Tibial artery (tissue), 4 donors: ENCODE measurements at regions of chr11 and their contacts with region 1.

Region 1: DNA sequence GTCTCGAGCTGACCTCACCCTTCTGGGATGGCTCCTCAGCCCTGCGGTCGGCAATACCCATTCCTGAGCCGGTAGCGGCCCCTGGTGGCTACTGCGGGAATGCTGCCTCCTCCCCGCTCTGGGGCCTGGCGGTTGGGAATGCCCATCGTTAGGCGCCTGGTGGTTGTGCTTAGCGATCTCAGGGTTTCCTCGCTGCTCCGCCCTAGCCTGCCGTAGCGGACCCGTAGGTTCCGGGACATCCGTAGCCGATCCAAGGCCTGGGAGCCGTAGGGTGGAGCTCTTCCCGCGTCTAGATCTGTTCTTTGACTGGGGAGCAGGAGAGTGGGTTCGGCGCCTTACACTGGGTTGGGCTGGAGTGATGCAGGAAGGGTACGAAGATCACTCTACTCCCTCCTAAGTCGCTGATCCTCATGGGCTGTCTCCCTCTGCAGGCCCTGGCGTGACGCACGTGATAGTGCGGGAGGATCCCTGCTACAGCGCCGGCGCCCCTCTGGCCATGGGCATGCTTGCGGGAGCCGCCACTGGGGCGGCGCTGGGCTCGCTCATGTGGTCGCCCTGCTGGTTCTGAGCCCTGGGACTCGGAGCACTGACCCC is 14.8 kb downstream of the PLEKHB1 start:
- DNase-seq: peak; percentile 90 to 92
- H3K4me3 ChIP-seq: peak overlapping the region; percentile 26 to 46
- H3K27ac ChIP-seq: peak overlapping the region in 1 of 2 donors; percentile 6
- H3K4me1 ChIP-seq: peaks cover 0 to 20% (median 14%) of the 10 kb centered on the region in 4 donors
- H3K27me3 ChIP-seq: no peaks in the 10 kb centered on the region
- CTCF ChIP-seq: peak; percentile 91 to 99

Region 2: GRCh38 chr11:73295231-73295995 is 365.7 kb before region 1 on chr11:
- intact Hi-C with region 1: loop called (anchors 10 kb)
- DNase-seq: peak; percentile 61 to 84
- H3K4me3 ChIP-seq: no peak overlapping the region
- H3K27ac ChIP-seq: peak overlapping the region in 1 of 2 donors; percentile 10
- H3K4me1 ChIP-seq: peaks cover 0 to 11% (median 7%) of the 10 kb centered on the region in 4 donors
- H3K27me3 ChIP-seq: no peaks in the 10 kb centered on the region
- CTCF ChIP-seq: peak; percentile 83 to 88

Region 3: GRCh38 chr11:73402834-73403185 is 258.3 kb before region 1 on chr11:
- intact Hi-C with region 1: loop called (anchors 2 kb)
- DNase-seq: no peak
- H3K4me3 ChIP-seq: no peak overlapping the region
- H3K27ac ChIP-seq: no peak overlapping the region
- H3K4me1 ChIP-seq: peaks cover 0 to 5% (median 2%) of the 10 kb centered on the region in 4 donors
- H3K27me3 ChIP-seq: no peaks in the 10 kb centered on the region
- CTCF ChIP-seq: no peak

Region 4: GRCh38 chr11:73625696-73626318 is 35.3 kb before region 1 on chr11:
- intact Hi-C with region 1: loop called (anchors 5 kb)
- DNase-seq: peak; percentile 59 to 84
- H3K4me3 ChIP-seq: peak overlapping the region in 1 of 2 donors; percentile 21
- H3K27ac ChIP-seq: no peak overlapping the region
- H3K4me1 ChIP-seq: peaks cover 0 to 5% (median 5%) of the 10 kb centered on the region in 4 donors
- H3K27me3 ChIP-seq: peaks cover 0 to 21% of the 10 kb centered on the region in 2 donors
- CTCF ChIP-seq: peak; percentile 73 to 92